ENCODE measurements at regions of chr6 and their contacts with region 1.

Region 1: DNA sequence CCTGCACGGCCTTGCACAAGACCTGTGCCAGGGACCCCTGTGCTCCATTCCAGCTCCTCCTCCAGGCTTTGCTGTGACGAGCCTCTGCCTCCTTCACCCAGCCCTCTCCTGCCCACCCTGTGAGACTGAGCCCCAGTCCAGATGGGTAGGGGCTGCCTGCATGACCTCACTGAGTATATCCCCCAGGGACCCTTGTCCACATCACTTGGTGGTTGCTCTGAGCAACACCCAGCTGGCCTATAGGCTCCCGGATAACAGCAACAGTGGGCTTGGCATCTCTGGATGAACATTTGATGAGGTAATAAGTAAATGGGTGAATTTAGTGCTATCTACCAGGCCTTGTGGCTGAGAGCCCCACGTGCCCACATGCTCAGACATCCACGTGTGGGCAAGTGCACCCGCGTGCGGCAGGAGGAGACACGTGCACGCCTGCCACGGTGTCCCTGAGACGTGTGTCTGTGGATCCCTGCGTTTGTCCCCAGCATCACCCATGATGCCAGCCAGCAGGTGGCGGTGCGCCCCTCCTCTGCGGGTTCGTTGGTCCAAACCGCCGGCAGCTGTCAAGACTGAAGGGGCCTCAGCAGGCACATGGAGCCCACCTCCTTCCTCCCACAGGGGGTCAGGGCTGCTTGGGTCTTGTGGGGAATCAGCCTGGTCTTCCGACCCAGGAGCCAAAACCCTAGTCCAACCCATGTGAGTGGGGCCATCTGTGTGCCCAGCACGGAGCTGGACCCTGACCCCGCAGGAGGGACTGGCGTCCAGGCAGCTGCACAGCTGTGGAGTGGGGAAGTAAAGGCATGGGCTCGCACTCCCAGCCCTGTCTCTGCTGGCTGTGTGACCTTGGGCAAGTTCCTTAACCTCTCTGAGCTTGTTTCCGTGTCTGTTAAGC is 45.9 kb downstream of the FGD2 start:
- DNase-seq: peak; percentile 88 to 94
- ATAC-seq: peak; percentile 53 to 80 (median 73)
- H3K4me3 ChIP-seq: no peak overlapping the region
- H3K4me3 Mint-ChIP-seq: peak overlapping the region; percentile 84
- H3K27ac ChIP-seq: peak overlapping the region; percentile 99
- H3K27ac Mint-ChIP-seq: peak overlapping the region; percentile 99 to 100
- H3K4me1 ChIP-seq: peaks cover 61% of the 10 kb centered on the region
- H3K4me1 Mint-ChIP-seq: peaks cover 60 to 63% of the 10 kb centered on the region in 2 donors
- H3K27me3 ChIP-seq: no peaks in the 10 kb centered on the region
- H3K27me3 Mint-ChIP-seq: no peaks in the 10 kb centered on the region
- CTCF ChIP-seq: peak; percentile 85

Region 2: DNA sequence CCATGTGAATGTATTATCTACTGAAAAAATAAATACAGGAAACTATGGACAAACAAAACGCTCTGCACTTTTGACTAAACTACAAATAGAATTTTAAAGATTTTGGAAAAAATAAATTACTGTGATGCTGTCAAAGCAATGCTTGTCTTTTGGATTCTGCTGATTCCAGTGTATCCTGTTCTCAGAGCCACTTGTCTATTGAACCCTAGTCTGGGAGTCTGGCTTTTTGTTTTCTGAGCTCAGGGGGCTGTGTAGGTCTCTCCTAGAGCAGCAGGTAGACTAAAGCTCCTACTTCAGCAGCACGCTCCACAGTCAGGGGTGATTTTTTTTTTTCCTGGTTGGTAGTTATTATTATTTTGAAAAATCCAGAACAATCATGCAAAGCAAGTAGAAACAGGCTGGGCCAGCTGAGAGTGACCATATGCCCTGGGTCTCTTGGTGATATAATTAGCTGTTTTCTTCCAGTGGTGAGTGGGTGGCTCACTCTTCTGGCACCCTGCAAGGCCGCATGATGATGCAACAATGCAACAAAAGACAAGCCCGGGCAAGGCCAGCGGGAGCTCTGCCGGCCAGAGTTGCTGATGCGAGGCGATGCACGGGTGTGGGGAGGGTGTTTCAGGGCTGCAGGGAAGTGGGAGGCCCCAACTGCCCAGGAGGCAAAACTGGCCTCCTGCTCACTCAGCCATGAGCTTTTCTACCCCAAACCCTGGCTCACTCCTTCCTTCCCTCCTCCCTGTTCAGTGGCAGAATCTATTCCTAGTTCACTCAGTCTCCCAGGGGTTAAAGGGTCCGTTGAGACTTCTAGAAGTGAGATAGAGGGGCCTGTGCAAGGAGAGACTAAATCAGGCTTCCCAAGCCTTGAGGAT is 384.4 kb before region 1 on chr6:
- intact Hi-C with region 1: no loop called
- DNase-seq: no peak
- ATAC-seq: peak in 1 of 3 donors; percentile 2
- H3K4me3 ChIP-seq: no peak overlapping the region
- H3K4me3 Mint-ChIP-seq: no peak overlapping the region
- H3K27ac ChIP-seq: no peak overlapping the region
- H3K27ac Mint-ChIP-seq: no peak overlapping the region
- H3K4me1 ChIP-seq: no peaks in the 10 kb centered on the region
- H3K4me1 Mint-ChIP-seq: no peaks in the 10 kb centered on the region
- H3K27me3 ChIP-seq: no peaks in the 10 kb centered on the region
- H3K27me3 Mint-ChIP-seq: peaks cover 5 to 9% of the 10 kb centered on the region in 2 donors
- CTCF ChIP-seq: no peak

Region 3: GRCh38 chr6:37029249-37029971 is 22.0 kb before region 1 on chr6:
- intact Hi-C with region 1: loop called (anchors 1 kb)
- DNase-seq: peak; percentile 56 to 71
- ATAC-seq: peak; percentile 56 to 94 (median 63)
- H3K4me3 ChIP-seq: no peak overlapping the region
- H3K4me3 Mint-ChIP-seq: no peak overlapping the region
- H3K27ac ChIP-seq: no peak overlapping the region
- H3K27ac Mint-ChIP-seq: peak overlapping the region; percentile 63 to 71
- H3K4me1 ChIP-seq: peaks cover 59% of the 10 kb centered on the region
- H3K4me1 Mint-ChIP-seq: peaks cover 45 to 63% of the 10 kb centered on the region in 2 donors
- H3K27me3 ChIP-seq: no peaks in the 10 kb centered on the region
- H3K27me3 Mint-ChIP-seq: no peaks in the 10 kb centered on the region
- CTCF ChIP-seq: peak; percentile 78

Region 4: GRCh38 chr6:37102279-37103168 is 51.1 kb after region 1 on chr6:
- intact Hi-C with region 1: loop called (anchors 2 kb)
- DNase-seq: peak; percentile 71 to 89
- ATAC-seq: peak; percentile 89 to 93 (median 93)
- H3K4me3 ChIP-seq: peak overlapping the region; percentile 29
- H3K4me3 Mint-ChIP-seq: peak overlapping the region; percentile 81
- H3K27ac ChIP-seq: peak overlapping the region; percentile 64
- H3K27ac Mint-ChIP-seq: peak overlapping the region; percentile 80 to 91
- H3K4me1 ChIP-seq: peaks cover 23% of the 10 kb centered on the region
- H3K4me1 Mint-ChIP-seq: peaks cover 22 to 25% of the 10 kb centered on the region in 2 donors
- H3K27me3 ChIP-seq: no peaks in the 10 kb centered on the region
- H3K27me3 Mint-ChIP-seq: no peaks in the 10 kb centered on the region
- CTCF ChIP-seq: no peak

Measured in natural killer cell (primary cell).